Activated B cell treated with CpG ODN at 0.5 μM for 24 hours (primary cell): ENCODE measurements at regions of chr6 and their contacts with region 1.

Region 1: GRCh38 chr6:32796848-32797776 is 19.7 kb downstream of the HLA-DOB start:
- DNase-seq: peak; percentile 82
- ATAC-seq: peak; percentile 87
- H3K4me3 Mint-ChIP-seq: peak overlapping the region; percentile 82
- H3K27ac Mint-ChIP-seq: peak overlapping the region; percentile 95
- H3K4me1 Mint-ChIP-seq: peaks cover 40% of the 10 kb centered on the region
- H3K27me3 Mint-ChIP-seq: no peaks in the 10 kb centered on the region
- CTCF ChIP-seq: peak; percentile 91

Region 2: GRCh38 chr6:32047850-32048766 is 749.0 kb before region 1 on chr6:
- CTCF ChIA-PET with region 1: no interaction called
- POLR2A ChIA-PET with region 1: no interaction called
- intact Hi-C with region 1: loop called (anchors 10 kb)
- DNase-seq: peak; percentile 71
- ATAC-seq: peak; percentile 92
- H3K4me3 Mint-ChIP-seq: no peak overlapping the region
- H3K27ac Mint-ChIP-seq: no peak overlapping the region
- H3K4me1 Mint-ChIP-seq: peaks cover 4% of the 10 kb centered on the region
- H3K27me3 Mint-ChIP-seq: peaks cover 7% of the 10 kb centered on the region
- CTCF ChIP-seq: no peak

Region 3: GRCh38 chr6:32195652-32195901 is 601.5 kb before region 1 on chr6:
- CTCF ChIA-PET with region 1: no interaction called
- POLR2A ChIA-PET with region 1: interaction called, 14 read pairs
- intact Hi-C with region 1: no loop called
- DNase-seq: peak; percentile 99
- ATAC-seq: peak; percentile 83
- H3K4me3 Mint-ChIP-seq: peak overlapping the region; percentile 99
- H3K27ac Mint-ChIP-seq: peak overlapping the region; percentile 100
- H3K4me1 Mint-ChIP-seq: peaks cover 57% of the 10 kb centered on the region
- H3K27me3 Mint-ChIP-seq: peaks cover 1% of the 10 kb centered on the region
- CTCF ChIP-seq: no peak

Region 4: GRCh38 chr6:32413427-32414047 is 383.6 kb before region 1 on chr6:
- CTCF ChIA-PET with region 1: interaction called, 33 read pairs
- POLR2A ChIA-PET with region 1: no interaction called
- intact Hi-C with region 1: loop called (anchors 1 kb)
- DNase-seq: peak; percentile 80
- ATAC-seq: peak; percentile 88
- H3K4me3 Mint-ChIP-seq: peak overlapping the region; percentile 75
- H3K27ac Mint-ChIP-seq: peak overlapping the region; percentile 5
- H3K4me1 Mint-ChIP-seq: peaks cover 14% of the 10 kb centered on the region
- H3K27me3 Mint-ChIP-seq: peaks cover 4% of the 10 kb centered on the region
- CTCF ChIP-seq: no peak

Region 5: GRCh38 chr6:32666420-32667300 is 130.5 kb before region 1 on chr6 and contains the start of gene HLA-DQB1:
- CTCF ChIA-PET with region 1: no interaction called
- POLR2A ChIA-PET with region 1: interaction called, 4 read pairs
- intact Hi-C with region 1: loop called (anchors 1 kb)
- DNase-seq: no peak
- ATAC-seq: peak; percentile 65
- H3K4me3 Mint-ChIP-seq: peak within 1 kb of the TSS; percentile 90
- H3K27ac Mint-ChIP-seq: peak within 1 kb of the TSS; percentile 94
- H3K4me1 Mint-ChIP-seq: peaks cover 65% of the 10 kb centered on the region
- H3K27me3 Mint-ChIP-seq: no peaks in the 10 kb centered on the region
- CTCF ChIP-seq: no peak
- total RNA-seq, gene HLA-DQB1: 262 and 310 TPM in 2 replicates

Region 6: GRCh38 chr6:32752580-32752979 is 44.5 kb before region 1 on chr6:
- CTCF ChIA-PET with region 1: no interaction called
- POLR2A ChIA-PET with region 1: no interaction called
- intact Hi-C with region 1: no loop called
- DNase-seq: no peak
- ATAC-seq: no peak
- H3K4me3 Mint-ChIP-seq: no peak overlapping the region
- H3K27ac Mint-ChIP-seq: no peak overlapping the region
- H3K4me1 Mint-ChIP-seq: peaks cover 1% of the 10 kb centered on the region
- H3K27me3 Mint-ChIP-seq: peaks cover 7% of the 10 kb centered on the region
- CTCF ChIP-seq: no peak

Region 7: GRCh38 chr6:32763427-32763826 is 33.7 kb before region 1 on chr6 and contains the start of gene HLA-DQB2:
- CTCF ChIA-PET with region 1: no interaction called
- POLR2A ChIA-PET with region 1: no interaction called
- intact Hi-C with region 1: no loop called
- DNase-seq: no peak
- ATAC-seq: peak; percentile 50
- H3K4me3 Mint-ChIP-seq: peak within 1 kb of the TSS; percentile 48
- H3K27ac Mint-ChIP-seq: peak within 1 kb of the TSS; percentile 27
- H3K4me1 Mint-ChIP-seq: peaks cover 3% of the 10 kb centered on the region
- H3K27me3 Mint-ChIP-seq: peaks cover 16% of the 10 kb centered on the region
- CTCF ChIP-seq: no peak
- total RNA-seq, gene HLA-DQB2: 95.7 and 107 TPM in 2 replicates

Region 8: GRCh38 chr6:32785781-32786533 is 11.2 kb before region 1 on chr6:
- CTCF ChIA-PET with region 1: interaction called, 13 read pairs
- POLR2A ChIA-PET with region 1: no interaction called
- intact Hi-C with region 1: no loop called
- DNase-seq: no peak
- ATAC-seq: peak; percentile 88
- H3K4me3 Mint-ChIP-seq: no peak overlapping the region
- H3K27ac Mint-ChIP-seq: no peak overlapping the region
- H3K4me1 Mint-ChIP-seq: peaks cover 2% of the 10 kb centered on the region
- H3K27me3 Mint-ChIP-seq: no peaks in the 10 kb centered on the region
- CTCF ChIP-seq: no peak

Region 9: GRCh38 chr6:32843979-32844838 is 47.1 kb after region 1 on chr6 and contains the start of gene PSMB8:
- CTCF ChIA-PET with region 1: interaction called, 11 read pairs
- POLR2A ChIA-PET with region 1: interaction called, 16 read pairs
- intact Hi-C with region 1: no loop called
- DNase-seq: peak; percentile 96
- ATAC-seq: peak; percentile 78
- H3K4me3 Mint-ChIP-seq: peak within 1 kb of the TSS; percentile 99
- H3K27ac Mint-ChIP-seq: peak within 1 kb of the TSS; percentile 100
- H3K4me1 Mint-ChIP-seq: peaks cover 92% of the 10 kb centered on the region
- H3K27me3 Mint-ChIP-seq: no peaks in the 10 kb centered on the region
- CTCF ChIP-seq: no peak
- total RNA-seq, gene PSMB8: 182 and 194 TPM in 2 replicates